HEK293T (cell line): ENCODE measurements at regions of chr6 and their contacts with region 1.

Region 1: GRCh38 chr6:79630883-79631692 is at the start of gene SH3BGRL2:
- DNase-seq: peak; percentile 84

Region 2: GRCh38 chr6:79600812-79601609 is 30.1 kb before region 1 on chr6:
- CTCF ChIA-PET with region 1: no interaction called
- POLR2A ChIA-PET with region 1: interaction called, 12 read pairs
- DNase-seq: peak; percentile 29